ENCODE measurements at regions of chr17 and their contacts with region 1.

Region 1: DNA sequence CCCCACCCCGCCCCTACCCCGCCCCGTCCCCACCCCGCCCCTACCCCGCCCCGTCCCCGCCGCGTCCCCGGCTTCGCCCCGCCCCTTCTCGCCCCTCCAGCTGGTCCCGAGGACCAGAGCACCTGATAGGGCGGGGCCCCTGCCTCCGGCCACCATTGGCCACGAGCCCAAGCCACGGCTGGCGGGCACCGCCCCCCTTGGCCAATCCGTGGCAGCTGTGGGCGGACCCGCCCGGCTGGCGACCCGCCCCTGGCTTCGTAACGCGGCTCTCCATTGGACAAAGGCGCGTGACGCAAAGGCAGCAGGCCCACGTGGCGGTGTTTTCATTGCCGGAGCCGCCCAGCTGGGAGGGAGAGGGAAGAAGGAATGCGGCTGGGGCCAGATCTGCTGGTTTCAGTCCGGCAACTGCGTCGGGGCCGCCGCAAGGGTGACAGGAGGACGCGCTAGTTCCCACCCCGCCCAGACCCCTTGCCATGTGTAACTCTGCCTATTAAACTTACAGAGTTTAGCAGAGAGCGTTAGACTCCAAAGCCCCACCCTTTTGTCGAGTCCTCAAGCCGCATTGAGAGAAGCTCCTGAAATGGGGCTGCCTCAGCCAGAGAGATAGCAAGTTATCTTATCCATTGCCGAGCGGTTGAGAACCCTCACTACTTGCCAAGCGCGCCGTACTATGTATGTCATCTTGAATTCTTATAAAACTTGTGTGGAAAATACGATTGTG is 403 bp upstream of the WIPI1 start:
- DNase-seq: peak; percentile 98 to 99
- ATAC-seq: peak; percentile 87 to 94 (median 91)
- H3K4me3 ChIP-seq: peak overlapping the region; percentile 29 to 95 (median 88)
- H3K27ac ChIP-seq: peak overlapping the region; percentile 85 to 99 (median 95)
- H3K4me1 ChIP-seq: peaks cover 0 to 83% (median 63%) of the 10 kb centered on the region in 9 donors
- H3K27me3 ChIP-seq: no peaks in the 10 kb centered on the region
- CTCF ChIP-seq: peak in 2 of 9 donors; percentile 3 to 5

Region 2: DNA sequence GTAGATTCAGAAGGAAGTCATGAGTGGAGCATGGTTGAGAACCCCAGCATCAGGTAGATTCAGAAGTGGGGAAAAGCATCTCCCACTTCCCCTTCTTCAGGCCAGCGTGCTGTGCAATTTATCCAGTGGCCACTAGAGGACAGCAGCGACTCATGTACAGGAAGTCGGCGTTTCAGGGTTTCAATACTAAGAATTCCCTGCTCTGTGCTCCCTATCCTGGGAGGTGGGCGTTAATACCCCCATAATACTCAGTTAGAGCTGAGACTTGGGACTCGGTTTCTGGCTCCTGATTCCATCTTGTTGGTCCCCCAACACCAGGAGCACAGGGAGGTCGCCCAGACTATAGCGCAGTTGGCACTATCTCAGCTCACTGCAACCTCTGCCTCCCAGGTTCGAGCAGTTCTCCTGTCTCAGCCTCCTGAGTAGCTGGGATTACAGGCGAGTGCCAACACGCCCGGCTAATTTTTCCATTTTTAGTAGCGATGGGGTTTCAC is 285.2 kb before region 1 on chr17:
- intact Hi-C with region 1: loop called in 9 of 10 experiments (anchors 2 to 10 kb)
- DNase-seq: peak; percentile 63 to 73
- ATAC-seq: peak; percentile 37 to 86 (median 74)
- H3K4me3 ChIP-seq: no peak overlapping the region
- H3K27ac ChIP-seq: no peak overlapping the region
- H3K4me1 ChIP-seq: peaks cover 0 to 4% (median 0%) of the 10 kb centered on the region in 9 donors
- H3K27me3 ChIP-seq: no peaks in the 10 kb centered on the region
- CTCF ChIP-seq: peak; percentile 93 to 99 (median 97)

Region 3: GRCh38 chr17:68247445-68248198 is 210.1 kb before region 1 on chr17 and contains the start of gene AMZ2:
- intact Hi-C with region 1: loop called in 1 of 10 experiments (anchors 5 kb)
- DNase-seq: peak; percentile 93 to 97
- ATAC-seq: peak; percentile 98 to 100 (median 99)
- H3K4me3 ChIP-seq: peak within 1 kb of the TSS; percentile 61 to 91 (median 80)
- H3K27ac ChIP-seq: peak within 1 kb of the TSS; percentile 86 to 98 (median 97)
- H3K4me1 ChIP-seq: peaks cover 0 to 25% (median 13%) of the 10 kb centered on the region in 9 donors
- H3K27me3 ChIP-seq: no peaks in the 10 kb centered on the region
- CTCF ChIP-seq: peak in 2 of 9 donors; percentile 2 to 8
- total RNA-seq, gene AMZ2: 70.7 to 140 (median 111) TPM

Region 4: GRCh38 chr17:68435876-68436842 is 21.5 kb before region 1 on chr17:
- intact Hi-C with region 1: loop called in 1 of 10 experiments (anchors 2 kb)
- DNase-seq: peak; percentile 58 to 83
- ATAC-seq: peak; percentile 43 to 77 (median 66)
- H3K4me3 ChIP-seq: no peak overlapping the region
- H3K27ac ChIP-seq: peak overlapping the region in 7 of 10 donors; percentile 35 to 90 (median 72)
- H3K4me1 ChIP-seq: peaks cover 3 to 80% (median 59%) of the 10 kb centered on the region in 9 donors
- H3K27me3 ChIP-seq: no peaks in the 10 kb centered on the region
- CTCF ChIP-seq: peak; percentile 84 to 95 (median 88)

Region 5: DNA sequence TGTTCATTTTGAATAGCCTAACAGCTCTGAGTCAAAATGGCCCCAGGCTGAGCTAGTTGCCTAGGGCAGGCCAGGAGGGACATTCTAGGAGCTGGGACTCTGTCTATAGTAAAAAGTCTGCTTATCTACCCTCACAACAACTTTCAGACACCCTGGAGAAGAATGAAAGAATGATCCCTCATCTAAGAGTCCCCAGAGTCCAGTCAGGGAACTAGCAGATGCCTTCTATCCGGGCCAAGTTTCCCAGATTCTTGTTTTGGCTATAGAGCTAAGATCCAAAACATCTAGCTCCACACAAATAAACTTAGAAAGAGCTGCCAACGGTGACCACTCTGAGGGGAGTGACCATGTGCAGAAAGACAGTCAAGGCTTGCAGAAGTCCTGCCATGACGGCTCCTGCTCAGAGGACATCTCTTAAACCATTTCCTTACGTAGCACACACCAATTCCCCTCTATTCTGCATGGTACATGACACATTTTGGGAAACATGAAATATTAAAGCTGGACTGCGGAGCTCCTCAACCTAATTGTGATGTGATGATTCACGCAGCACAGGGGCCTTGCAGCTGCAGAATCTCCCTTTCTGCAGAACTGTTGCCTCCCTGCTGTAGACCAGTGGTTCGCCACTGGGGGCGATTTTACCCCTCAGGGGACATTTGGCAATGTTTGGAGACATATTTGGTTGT is 119.3 kb after region 1 on chr17:
- intact Hi-C with region 1: no loop called
- DNase-seq: peak; percentile 21 to 45
- ATAC-seq: peak; percentile 73 to 85 (median 78)
- H3K4me3 ChIP-seq: no peak overlapping the region
- H3K27ac ChIP-seq: peak overlapping the region in 8 of 10 donors; percentile 7 to 89 (median 50)
- H3K4me1 ChIP-seq: peaks cover 0 to 72% (median 4%) of the 10 kb centered on the region in 9 donors
- H3K27me3 ChIP-seq: no peaks in the 10 kb centered on the region
- CTCF ChIP-seq: peak in 2 of 9 donors; percentile 10 to 12

Region 6: DNA sequence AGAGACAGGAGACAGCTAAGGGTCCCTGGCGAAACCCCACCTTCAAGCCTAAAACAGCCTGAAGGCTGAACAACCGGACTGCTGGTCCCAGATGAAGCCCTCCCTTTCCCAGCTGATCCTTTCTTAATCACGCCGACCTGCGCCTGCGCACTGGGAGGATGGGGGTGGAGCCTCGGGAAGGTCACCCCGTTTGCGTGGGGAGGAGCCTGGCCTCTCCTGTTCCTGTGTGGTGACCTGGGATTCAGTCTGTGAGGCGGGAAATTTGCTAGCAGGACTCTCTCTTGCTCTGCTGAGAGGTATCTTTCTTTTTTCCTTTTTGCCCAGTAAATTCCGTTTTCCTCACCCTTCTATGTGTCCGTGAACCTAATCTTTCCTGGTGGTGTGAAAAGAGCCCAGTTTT is 133.9 kb after region 1 on chr17:
- intact Hi-C with region 1: loop called in 1 of 10 experiments (anchors 10 kb)
- DNase-seq: peak; percentile 29 to 31
- ATAC-seq: peak in 2 of 8 donors; percentile 24 to 52
- H3K4me3 ChIP-seq: no peak overlapping the region
- H3K27ac ChIP-seq: peak overlapping the region in 1 of 10 donors; percentile 45
- H3K4me1 ChIP-seq: peaks cover 0 to 50% (median 15%) of the 10 kb centered on the region in 9 donors
- H3K27me3 ChIP-seq: no peaks in the 10 kb centered on the region
- CTCF ChIP-seq: no peak

Region 7: DNA sequence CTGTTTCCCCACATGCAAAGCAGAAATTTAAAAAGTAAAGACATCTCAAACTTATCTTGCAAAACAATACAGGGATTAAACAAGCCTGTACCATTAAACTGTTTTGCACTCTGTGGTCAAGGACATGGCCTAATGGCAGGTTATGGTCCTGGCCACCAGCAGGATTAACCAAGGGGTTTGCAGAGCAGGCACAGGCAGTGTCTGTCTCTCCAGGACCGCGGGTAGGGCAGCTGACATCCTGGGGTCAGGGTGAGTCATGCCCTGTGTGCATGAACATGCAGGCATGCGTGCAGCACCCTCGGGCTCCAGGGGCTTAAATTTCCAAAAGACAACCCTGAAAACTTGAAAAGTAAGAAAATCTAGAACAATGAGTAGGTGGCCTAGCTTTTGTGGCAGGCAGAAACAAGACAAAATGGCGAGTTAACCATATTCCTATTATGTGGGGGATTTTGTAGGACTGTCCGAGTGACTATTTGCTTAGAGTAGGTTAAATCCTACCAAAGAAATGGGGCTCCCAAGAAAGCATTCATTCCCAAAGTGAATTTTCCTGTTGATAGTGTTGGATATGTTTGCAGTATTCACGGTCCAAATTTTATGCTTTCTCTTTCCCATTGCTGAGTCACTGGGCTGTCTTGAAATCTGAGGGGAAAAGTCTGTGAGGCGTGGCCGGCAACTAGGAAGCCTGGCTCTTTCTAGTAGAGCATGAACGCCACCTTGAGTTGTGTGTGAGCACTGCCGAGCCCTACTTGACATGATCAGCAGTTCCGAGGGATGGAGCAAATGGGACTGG is 301.8 kb after region 1 on chr17:
- intact Hi-C with region 1: loop called in 3 of 10 experiments (anchors 5 to 10 kb)
- DNase-seq: peak; percentile 81 to 88
- ATAC-seq: peak; percentile 96 to 99 (median 98)
- H3K4me3 ChIP-seq: peak overlapping the region in 7 of 10 donors; percentile 14 to 49 (median 40)
- H3K27ac ChIP-seq: peak overlapping the region; percentile 42 to 90 (median 79)
- H3K4me1 ChIP-seq: peaks cover 0 to 14% (median 8%) of the 10 kb centered on the region in 9 donors
- H3K27me3 ChIP-seq: no peaks in the 10 kb centered on the region
- CTCF ChIP-seq: peak; percentile 69 to 95 (median 86)